ENCODE measurements at regions of chrX and their contacts with region 1.

Region 1: DNA sequence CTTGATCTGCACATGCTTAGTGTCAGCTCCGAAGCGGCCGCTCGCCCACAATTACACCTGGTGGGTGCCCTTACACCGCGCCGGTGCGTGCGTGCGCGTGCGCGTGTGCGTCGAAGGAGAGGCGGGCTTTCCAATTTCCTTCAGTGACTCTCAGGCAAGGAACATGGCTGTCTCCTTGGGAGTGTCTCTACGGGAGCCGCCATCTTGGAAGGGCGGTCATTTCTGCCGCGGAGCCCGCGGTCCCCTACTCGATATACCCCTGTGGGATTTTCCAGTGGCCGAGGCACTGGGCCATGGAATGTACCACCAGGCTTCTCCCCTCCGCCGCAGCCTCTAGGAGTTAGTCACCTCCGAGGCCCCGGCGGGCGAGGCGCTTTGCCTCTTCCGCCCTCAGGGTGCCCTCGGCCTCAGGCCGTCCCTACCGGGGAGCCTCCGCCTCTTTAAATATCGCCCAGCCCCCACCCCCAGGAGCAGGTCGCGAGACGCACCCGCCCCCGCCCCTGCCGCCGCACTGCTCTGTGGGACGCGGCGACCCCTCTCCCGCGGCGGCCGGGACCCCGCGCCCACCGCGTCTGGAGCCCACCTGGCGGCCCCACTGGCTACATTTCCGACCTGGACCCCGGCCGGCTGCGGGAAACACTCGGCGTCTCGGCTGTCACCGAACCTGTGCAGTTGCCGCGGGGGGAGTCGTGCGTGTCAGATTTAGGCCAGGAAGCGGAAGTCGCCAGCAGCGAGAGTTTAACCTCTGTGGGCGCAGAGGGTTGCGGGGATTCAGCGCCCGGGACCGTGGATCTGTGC is at the start of gene ZNF41:
- DNase-seq: peak; percentile 67 to 83 (median 70)
- H3K4me3 ChIP-seq: peak within 1 kb of the TSS; percentile 83 to 85 (median 83)
- H3K4me3 Mint-ChIP-seq: peak within 1 kb of the TSS; percentile 89 to 91
- H3K27ac ChIP-seq: peak within 1 kb of the TSS; percentile 86 to 91
- H3K27ac Mint-ChIP-seq: peak within 1 kb of the TSS; percentile 91 to 98 (median 96)
- H3K4me1 ChIP-seq: peaks cover 19 to 23% of the 10 kb centered on the region in 2 donors
- H3K4me1 Mint-ChIP-seq: peaks cover 29% of the 10 kb centered on the region
- H3K27me3 ChIP-seq: no peaks in the 10 kb centered on the region
- H3K27me3 Mint-ChIP-seq: peaks cover 0 to 11% (median 0%) of the 10 kb centered on the region in 3 donors
- CTCF ChIP-seq: no peak
- polyA plus RNA-seq, gene ZNF41: 1.8 to 4.3 (median 3.1) TPM

Region 2: DNA sequence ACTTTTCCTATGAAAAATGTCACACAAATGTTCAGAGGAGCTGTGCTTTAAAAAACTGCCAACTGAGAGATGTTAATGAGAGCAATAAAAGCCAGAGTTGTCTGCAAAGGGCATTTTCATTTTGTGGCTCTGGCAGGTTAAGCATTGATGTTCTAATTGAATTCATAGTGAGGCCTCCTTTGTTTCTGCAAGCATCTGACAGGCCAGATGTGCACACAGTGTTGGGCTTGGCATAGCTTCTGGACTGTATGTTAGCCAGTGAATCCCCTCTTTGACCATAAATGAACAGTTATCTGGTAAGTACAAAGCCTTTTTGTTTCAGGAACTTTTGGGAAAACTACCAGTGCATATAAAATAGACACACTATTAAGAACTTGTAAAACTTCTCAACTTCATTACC is 488.6 kb before region 1 on chrX:
- intact Hi-C with region 1: no loop called
- DNase-seq: no peak
- H3K4me3 ChIP-seq: no peak overlapping the region
- H3K4me3 Mint-ChIP-seq: no peak overlapping the region
- H3K27ac ChIP-seq: no peak overlapping the region
- H3K27ac Mint-ChIP-seq: no peak overlapping the region
- H3K4me1 ChIP-seq: no peaks in the 10 kb centered on the region
- H3K4me1 Mint-ChIP-seq: no peaks in the 10 kb centered on the region
- H3K27me3 ChIP-seq: peaks cover 0 to 2% of the 10 kb centered on the region in 2 donors
- H3K27me3 Mint-ChIP-seq: peaks cover 0 to 4% (median 0%) of the 10 kb centered on the region in 3 donors
- CTCF ChIP-seq: no peak

Region 3: DNA sequence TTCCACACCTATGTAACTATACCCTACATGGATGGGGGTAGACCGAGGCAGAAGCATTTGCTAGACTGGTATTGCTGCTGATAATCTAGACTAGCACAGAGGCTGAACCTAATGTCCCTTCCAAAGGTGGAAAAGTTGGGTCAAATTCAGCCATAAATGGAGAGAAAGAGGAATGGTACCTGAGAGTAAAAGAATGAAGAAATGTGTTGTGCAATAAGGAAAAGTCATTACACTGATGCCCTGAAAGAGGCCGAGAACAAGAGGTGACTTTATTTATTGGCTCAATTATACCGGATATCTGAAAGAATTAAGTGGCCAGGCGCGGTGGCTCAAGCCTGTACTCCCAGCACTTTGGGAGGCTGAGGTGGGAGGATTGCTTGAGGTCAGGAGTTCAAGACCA is 51.8 kb before region 1 on chrX:
- intact Hi-C with region 1: no loop called
- DNase-seq: no peak
- H3K4me3 ChIP-seq: no peak overlapping the region
- H3K4me3 Mint-ChIP-seq: no peak overlapping the region
- H3K27ac ChIP-seq: no peak overlapping the region
- H3K27ac Mint-ChIP-seq: no peak overlapping the region
- H3K4me1 ChIP-seq: no peaks in the 10 kb centered on the region
- H3K4me1 Mint-ChIP-seq: no peaks in the 10 kb centered on the region
- H3K27me3 ChIP-seq: no peaks in the 10 kb centered on the region
- H3K27me3 Mint-ChIP-seq: peaks cover 0 to 2% (median 0%) of the 10 kb centered on the region in 3 donors
- CTCF ChIP-seq: no peak

Region 4: GRCh38 chrX:47523297-47523696 is 40.6 kb after region 1 on chrX:
- intact Hi-C with region 1: loop called in 1 of 2 experiments (anchors 5 kb)
- DNase-seq: peak; percentile 77 to 81 (median 79)
- H3K4me3 ChIP-seq: peak overlapping the region; percentile 4 to 74 (median 48)
- H3K4me3 Mint-ChIP-seq: peak overlapping the region; percentile 66 to 70
- H3K27ac ChIP-seq: no peak overlapping the region
- H3K27ac Mint-ChIP-seq: peak overlapping the region in 2 of 7 donors; percentile 43 to 50
- H3K4me1 ChIP-seq: peaks cover 6 to 11% of the 10 kb centered on the region in 2 donors
- H3K4me1 Mint-ChIP-seq: peaks cover 5% of the 10 kb centered on the region
- H3K27me3 ChIP-seq: peaks cover 0 to 5% of the 10 kb centered on the region in 2 donors
- H3K27me3 Mint-ChIP-seq: peaks cover 2 to 17% (median 8%) of the 10 kb centered on the region in 3 donors
- CTCF ChIP-seq: peak; percentile 68

Region 5: GRCh38 chrX:47743504-47743903 is 260.8 kb after region 1 on chrX:
- intact Hi-C with region 1: no loop called
- DNase-seq: no peak
- H3K4me3 ChIP-seq: no peak overlapping the region
- H3K4me3 Mint-ChIP-seq: no peak overlapping the region
- H3K27ac ChIP-seq: no peak overlapping the region
- H3K27ac Mint-ChIP-seq: no peak overlapping the region
- H3K4me1 ChIP-seq: no peaks in the 10 kb centered on the region
- H3K4me1 Mint-ChIP-seq: peaks cover 3% of the 10 kb centered on the region
- H3K27me3 ChIP-seq: no peaks in the 10 kb centered on the region
- H3K27me3 Mint-ChIP-seq: peaks cover 0 to 1% (median 0%) of the 10 kb centered on the region in 3 donors
- CTCF ChIP-seq: no peak

Region 6: GRCh38 chrX:48636776-48637175 is 1154.1 kb after region 1 on chrX:
- intact Hi-C with region 1: no loop called
- DNase-seq: no peak
- H3K4me3 ChIP-seq: no peak overlapping the region
- H3K4me3 Mint-ChIP-seq: no peak overlapping the region
- H3K27ac ChIP-seq: no peak overlapping the region
- H3K27ac Mint-ChIP-seq: no peak overlapping the region
- H3K4me1 ChIP-seq: peaks cover 4 to 6% of the 10 kb centered on the region in 2 donors
- H3K4me1 Mint-ChIP-seq: peaks cover 2% of the 10 kb centered on the region
- H3K27me3 ChIP-seq: no peaks in the 10 kb centered on the region
- H3K27me3 Mint-ChIP-seq: peaks cover 0 to 6% (median 0%) of the 10 kb centered on the region in 3 donors
- CTCF ChIP-seq: no peak

Measured in CD14-positive monocyte (primary cell).